ENCODE measurements at regions of chr1 and their contacts with region 1.

Region 1: GRCh38 chr1:202810615-202811295 is at the start of gene PCAT6:
- DNase-seq: peak; percentile 96
- H3K4me3 ChIP-seq: peak within 1 kb of the TSS; percentile 50 to 62
- H3K27ac ChIP-seq: peak within 1 kb of the TSS; percentile 84 to 89
- H3K4me1 ChIP-seq: no peaks in the 10 kb centered on the region
- H3K27me3 ChIP-seq: no peaks in the 10 kb centered on the region
- CTCF ChIP-seq: peak in 1 of 4 experiments; percentile 30
- POLR2A ChIP-seq: peak; percentile 95
- total RNA-seq, gene PCAT6: 6.2 to 9.0 TPM

Region 2: DNA sequence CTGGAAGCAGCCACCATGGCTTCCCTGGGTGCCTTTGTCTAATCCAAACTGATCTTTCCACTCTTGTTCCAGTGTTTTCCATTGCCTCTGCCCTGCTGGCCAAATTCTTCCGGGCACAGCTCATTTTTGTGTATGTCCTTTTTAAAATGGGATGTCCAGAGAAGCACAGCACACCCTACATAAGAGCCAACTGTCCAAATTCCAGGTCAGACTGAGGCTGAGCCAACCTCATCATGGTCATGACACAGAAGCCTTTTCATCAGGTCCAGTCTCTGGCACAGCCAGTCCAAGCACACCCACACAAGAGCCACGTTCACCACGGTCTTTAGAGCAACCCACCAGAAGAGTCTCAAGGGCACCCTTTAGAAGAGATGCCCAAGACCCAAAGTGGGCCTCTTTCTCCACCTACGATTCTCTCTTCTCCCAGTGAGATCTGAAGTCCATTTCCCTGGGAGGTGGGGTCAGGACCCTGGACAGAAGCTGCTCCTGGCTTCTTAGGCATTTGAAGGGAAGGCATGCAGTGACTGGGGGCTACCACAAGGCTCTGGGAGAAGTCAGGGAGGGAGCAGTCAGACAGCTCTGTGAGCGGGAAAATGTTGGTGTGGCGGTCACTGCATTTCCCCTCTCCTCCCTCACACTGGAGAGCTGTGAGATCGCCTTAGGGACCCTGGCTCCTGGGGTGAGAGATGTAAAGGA is 153.7 kb before region 1 on chr1:
- intact Hi-C with region 1: no loop called
- DNase-seq: no peak
- H3K4me3 ChIP-seq: no peak overlapping the region
- H3K27ac ChIP-seq: no peak overlapping the region
- H3K4me1 ChIP-seq: no peaks in the 10 kb centered on the region
- H3K27me3 ChIP-seq: no peaks in the 10 kb centered on the region
- CTCF ChIP-seq: no peak
- POLR2A ChIP-seq: no peak

Region 3: DNA sequence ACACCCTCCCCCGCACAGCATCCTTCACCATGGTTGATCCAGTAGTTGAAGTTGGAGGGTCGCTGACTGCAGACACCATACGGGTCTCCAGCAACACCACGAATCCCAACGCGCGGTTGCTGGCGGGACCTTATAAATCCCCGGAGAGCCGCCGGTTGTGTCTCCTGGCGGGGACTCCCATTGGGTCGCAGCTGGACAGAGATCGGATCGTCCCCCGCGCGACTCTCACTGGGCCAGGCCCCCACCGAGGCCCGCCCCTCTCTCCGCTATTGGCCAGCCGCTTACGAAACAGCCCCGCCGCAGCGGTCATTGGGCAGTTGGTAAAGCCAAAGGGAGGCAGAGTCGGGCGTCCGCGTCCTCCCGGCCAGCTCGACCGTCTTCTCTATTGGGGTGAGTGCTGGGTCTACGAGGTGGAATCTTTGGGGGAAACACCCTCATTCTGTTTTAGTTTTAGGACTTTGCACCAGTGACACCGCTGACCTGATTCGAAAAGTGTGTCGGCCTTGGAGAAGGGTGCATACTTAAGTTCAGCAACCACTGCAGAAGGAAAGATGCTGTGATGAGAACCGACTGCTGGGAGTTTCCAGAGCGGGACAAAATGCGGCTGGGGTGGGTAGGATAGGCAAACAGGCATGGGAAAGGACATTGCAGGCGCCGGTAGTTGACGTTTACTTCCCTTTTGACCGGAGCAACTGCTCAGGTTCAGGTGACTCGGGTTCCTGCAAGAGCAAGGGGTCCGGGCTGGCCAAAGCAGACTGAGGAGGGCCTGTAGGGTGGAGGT is 50.9 kb after region 1 on chr1:
- intact Hi-C with region 1: loop called (anchors 5 kb)
- DNase-seq: peak; percentile 95
- H3K4me3 ChIP-seq: peak overlapping the region; percentile 53 to 73
- H3K27ac ChIP-seq: peak overlapping the region; percentile 63 to 74
- H3K4me1 ChIP-seq: peaks cover 4% of the 10 kb centered on the region
- H3K27me3 ChIP-seq: no peaks in the 10 kb centered on the region
- CTCF ChIP-seq: no peak
- POLR2A ChIP-seq: peak; percentile 73

Region 4: DNA sequence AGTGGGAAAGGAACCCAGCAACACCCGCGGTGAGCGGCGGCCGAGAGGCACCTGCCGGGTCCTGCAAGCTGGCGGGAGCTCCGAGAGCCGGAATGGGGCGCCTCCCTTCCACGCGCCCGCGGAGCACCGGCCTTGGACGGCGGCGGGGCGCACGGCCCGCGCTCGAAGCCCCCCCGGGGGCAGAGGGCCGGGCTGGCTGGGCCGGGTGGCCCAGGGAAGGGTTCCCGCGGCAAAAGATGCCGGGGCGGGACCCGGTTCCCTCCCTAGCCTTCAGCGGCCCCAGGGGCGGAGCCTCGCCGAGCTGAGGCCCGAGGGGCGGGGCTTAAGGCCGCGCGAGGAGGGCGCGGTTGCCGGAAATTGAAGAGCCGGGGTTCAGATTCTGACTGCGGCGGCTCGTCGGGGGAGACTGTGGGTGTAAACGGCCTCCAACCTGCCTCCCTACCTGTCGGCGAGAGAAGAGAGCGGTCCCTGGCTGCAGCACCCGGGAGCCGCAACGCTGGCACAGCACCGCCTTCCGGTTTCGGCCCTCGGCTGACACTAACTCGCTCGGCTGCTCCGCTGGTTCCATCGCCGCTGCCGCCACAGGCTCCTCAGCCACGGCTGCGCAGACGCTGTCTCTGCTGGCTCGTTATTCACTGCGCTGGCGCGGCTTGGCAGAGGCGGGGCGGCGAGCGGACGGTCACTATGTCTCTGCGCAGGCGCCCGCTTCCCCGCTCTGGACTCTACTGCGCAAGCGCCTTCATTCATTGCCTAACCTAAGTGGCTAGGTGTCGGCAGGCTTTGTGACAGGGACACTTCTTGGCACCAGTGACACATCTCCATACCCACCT is 78.0 kb after region 1 on chr1 and contains the start of gene RABIF:
- intact Hi-C with region 1: loop called (anchors 5 kb)
- DNase-seq: peak; percentile 96
- H3K4me3 ChIP-seq: peak within 1 kb of the TSS; percentile 80 to 82
- H3K27ac ChIP-seq: peak within 1 kb of the TSS; percentile 94 to 98
- H3K4me1 ChIP-seq: no peaks in the 10 kb centered on the region
- H3K27me3 ChIP-seq: no peaks in the 10 kb centered on the region
- CTCF ChIP-seq: peak in 2 of 4 experiments; percentile 21 to 41
- POLR2A ChIP-seq: peak; percentile 87
- total RNA-seq, gene RABIF: 6.6 to 14.5 TPM

Region 5: GRCh38 chr1:203216274-203217138 is 405.8 kb after region 1 on chr1:
- intact Hi-C with region 1: no loop called
- DNase-seq: peak; percentile 51
- H3K4me3 ChIP-seq: no peak overlapping the region
- H3K27ac ChIP-seq: no peak overlapping the region
- H3K4me1 ChIP-seq: no peaks in the 10 kb centered on the region
- H3K27me3 ChIP-seq: no peaks in the 10 kb centered on the region
- CTCF ChIP-seq: peak; percentile 34 to 81 (median 76)
- POLR2A ChIP-seq: no peak

Measured in prostate gland (tissue), 2 donors.